HEK293 (cell line): ENCODE measurements at regions of chr2 and their contacts with region 1.

Region 1: GRCh38 chr2:225660262-225661131 is 261.0 kb downstream of the NYAP2 start:
- H3K4me3 ChIP-seq: no peak overlapping the region
- H3K27ac ChIP-seq: no peak overlapping the region
- H3K4me1 ChIP-seq: no peaks in the 10 kb centered on the region
- CTCF ChIP-seq: peak; percentile 43; the same call in 1 of the 2 replicates

Region 2: GRCh38 chr2:225122583-225123486 is 537.7 kb before region 1 on chr2:
- CTCF ChIA-PET with region 1: interaction called, 26 read pairs
- POLR2A ChIA-PET with region 1: no interaction called
- H3K4me3 ChIP-seq: no peak overlapping the region
- H3K27ac ChIP-seq: no peak overlapping the region
- H3K4me1 ChIP-seq: no peaks in the 10 kb centered on the region
- CTCF ChIP-seq: no peak

Region 3: GRCh38 chr2:225282858-225283710 is 377.4 kb before region 1 on chr2:
- CTCF ChIA-PET with region 1: interaction called, 28 read pairs
- POLR2A ChIA-PET with region 1: no interaction called
- H3K4me3 ChIP-seq: no peak overlapping the region
- H3K27ac ChIP-seq: no peak overlapping the region
- H3K4me1 ChIP-seq: no peaks in the 10 kb centered on the region
- CTCF ChIP-seq: no peak

Region 4: DNA sequence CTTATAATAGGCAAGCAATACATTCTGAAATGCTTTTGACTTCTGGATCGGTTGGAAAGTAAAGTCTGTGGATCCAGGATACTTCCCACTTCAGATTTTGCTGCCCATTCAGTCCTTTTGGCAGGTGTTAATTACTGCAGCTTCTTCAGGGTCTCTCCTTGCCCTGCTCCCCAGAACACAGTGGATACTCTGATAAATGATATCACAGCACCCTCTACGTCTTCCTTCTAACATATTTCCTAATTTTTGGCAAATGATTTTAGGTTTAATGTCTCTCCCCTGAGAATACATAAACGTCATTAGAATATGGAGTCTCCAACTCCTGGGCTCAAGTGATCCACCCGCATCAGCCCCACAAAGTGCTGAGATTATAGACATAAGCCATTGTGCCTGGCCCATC is 11.2 kb before region 1 on chr2:
- CTCF ChIA-PET with region 1: interaction called, 20 read pairs
- POLR2A ChIA-PET with region 1: no interaction called
- H3K4me3 ChIP-seq: no peak overlapping the region
- H3K27ac ChIP-seq: no peak overlapping the region
- H3K4me1 ChIP-seq: no peaks in the 10 kb centered on the region
- CTCF ChIP-seq: no peak